Breast epithelium (tissue), 4 donors: ENCODE measurements at regions of chr18 and their contacts with region 1.

Region 1: DNA sequence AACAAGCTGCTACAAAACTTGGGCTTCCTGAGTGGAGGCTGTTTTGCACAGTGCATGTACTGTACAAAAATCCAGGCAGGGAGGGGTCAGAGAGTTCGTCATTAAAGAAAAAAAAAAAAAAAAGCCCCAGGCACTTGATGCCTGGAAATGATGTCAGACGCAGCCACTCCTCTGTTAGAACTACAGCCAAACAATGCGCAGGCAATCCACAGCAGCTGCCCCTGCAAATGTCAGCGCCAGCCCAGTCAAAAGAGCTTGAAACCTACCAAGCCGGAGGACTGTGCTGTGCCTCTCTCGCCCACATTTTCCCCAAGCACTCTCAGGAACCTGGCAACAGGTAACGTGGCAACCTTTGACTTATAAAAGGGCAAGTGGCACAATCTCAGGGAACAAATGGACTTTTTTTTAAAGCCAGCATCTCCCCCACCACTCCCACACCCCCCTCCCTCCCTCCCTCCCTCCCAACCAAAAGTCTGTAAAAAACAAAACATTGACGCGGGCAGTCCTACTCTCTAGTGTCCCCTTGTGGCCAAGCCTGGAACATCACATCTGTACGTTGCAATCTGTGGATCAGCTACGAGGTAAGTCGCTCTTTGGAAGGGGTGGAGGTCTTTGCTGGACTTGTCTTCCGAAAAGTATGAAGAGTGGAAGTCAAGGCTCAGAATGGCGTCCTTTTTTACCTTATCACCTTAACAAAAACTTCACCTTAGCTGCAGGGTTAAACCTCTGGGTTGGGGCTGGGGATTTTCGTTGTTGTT is 144.1 kb downstream of the TGIF1 start:
- DNase-seq: peak; percentile 89 to 91
- H3K4me3 ChIP-seq: peak overlapping the region; percentile 47 to 68 (median 50)
- H3K27ac ChIP-seq: peak overlapping the region; percentile 98
- H3K4me1 ChIP-seq: peaks cover 5 to 35% of the 10 kb centered on the region in 2 donors
- H3K27me3 ChIP-seq: no peaks in the 10 kb centered on the region
- CTCF ChIP-seq: peak; percentile 89 to 95 (median 94)
- POLR2A ChIP-seq: no peak

Region 2: DNA sequence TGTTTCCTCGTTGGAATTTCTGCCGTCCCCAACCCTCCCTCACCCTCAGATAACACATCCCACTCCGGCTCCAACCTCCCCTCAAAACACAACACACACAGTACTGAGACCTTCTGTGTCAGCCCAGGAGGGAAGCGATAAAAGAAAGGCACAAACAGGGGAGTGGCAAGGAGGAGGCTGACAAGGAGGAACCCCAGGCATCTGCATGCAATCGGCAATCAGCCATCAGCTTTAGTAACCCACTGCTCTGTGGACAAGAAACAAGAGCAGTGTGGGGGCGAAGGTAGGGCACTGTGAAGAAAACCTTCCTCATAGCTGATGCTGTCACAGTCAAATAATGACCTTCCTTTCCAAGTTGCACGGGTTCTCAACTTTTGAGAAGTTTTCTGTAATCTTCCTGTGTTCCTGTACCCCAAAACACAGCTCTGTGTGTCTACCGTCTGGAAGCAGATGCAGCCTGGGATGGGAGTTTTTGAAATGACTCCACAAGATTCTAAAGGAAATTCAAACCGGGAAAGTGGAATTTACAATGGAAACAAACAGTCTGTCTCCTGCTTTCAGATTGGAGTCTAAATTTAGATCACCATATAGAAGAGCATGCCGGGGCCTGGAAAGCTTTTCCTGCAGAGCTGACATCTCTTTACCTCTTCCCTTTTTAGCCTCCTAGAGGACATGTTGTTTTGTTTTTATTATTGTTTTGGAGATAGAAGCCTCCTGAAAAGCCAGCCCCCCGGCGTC is 564.7 kb before region 1 on chr18:
- intact Hi-C with region 1: no loop called
- DNase-seq: no peak
- H3K4me3 ChIP-seq: no peak overlapping the region
- H3K27ac ChIP-seq: peak overlapping the region; percentile 25 to 40
- H3K4me1 ChIP-seq: no peaks in the 10 kb centered on the region
- H3K27me3 ChIP-seq: no peaks in the 10 kb centered on the region
- CTCF ChIP-seq: no peak
- POLR2A ChIP-seq: no peak

Region 3: GRCh38 chr18:3261371-3262246 is 332.5 kb before region 1 on chr18 and contains the start of gene MYL12B:
- intact Hi-C with region 1: loop called (anchors 10 kb)
- DNase-seq: peak; percentile 78 to 84
- H3K4me3 ChIP-seq: peak within 1 kb of the TSS; percentile 85 to 98 (median 96)
- H3K27ac ChIP-seq: peak within 1 kb of the TSS; percentile 97 to 98
- H3K4me1 ChIP-seq: peaks cover 0 to 8% of the 10 kb centered on the region in 2 donors
- H3K27me3 ChIP-seq: no peaks in the 10 kb centered on the region
- CTCF ChIP-seq: peak in 2 of 3 donors; percentile 20 to 28
- POLR2A ChIP-seq: peak; percentile 90
- total RNA-seq, gene MYL12B: 305 to 371 (median 335) TPM

Region 4: DNA sequence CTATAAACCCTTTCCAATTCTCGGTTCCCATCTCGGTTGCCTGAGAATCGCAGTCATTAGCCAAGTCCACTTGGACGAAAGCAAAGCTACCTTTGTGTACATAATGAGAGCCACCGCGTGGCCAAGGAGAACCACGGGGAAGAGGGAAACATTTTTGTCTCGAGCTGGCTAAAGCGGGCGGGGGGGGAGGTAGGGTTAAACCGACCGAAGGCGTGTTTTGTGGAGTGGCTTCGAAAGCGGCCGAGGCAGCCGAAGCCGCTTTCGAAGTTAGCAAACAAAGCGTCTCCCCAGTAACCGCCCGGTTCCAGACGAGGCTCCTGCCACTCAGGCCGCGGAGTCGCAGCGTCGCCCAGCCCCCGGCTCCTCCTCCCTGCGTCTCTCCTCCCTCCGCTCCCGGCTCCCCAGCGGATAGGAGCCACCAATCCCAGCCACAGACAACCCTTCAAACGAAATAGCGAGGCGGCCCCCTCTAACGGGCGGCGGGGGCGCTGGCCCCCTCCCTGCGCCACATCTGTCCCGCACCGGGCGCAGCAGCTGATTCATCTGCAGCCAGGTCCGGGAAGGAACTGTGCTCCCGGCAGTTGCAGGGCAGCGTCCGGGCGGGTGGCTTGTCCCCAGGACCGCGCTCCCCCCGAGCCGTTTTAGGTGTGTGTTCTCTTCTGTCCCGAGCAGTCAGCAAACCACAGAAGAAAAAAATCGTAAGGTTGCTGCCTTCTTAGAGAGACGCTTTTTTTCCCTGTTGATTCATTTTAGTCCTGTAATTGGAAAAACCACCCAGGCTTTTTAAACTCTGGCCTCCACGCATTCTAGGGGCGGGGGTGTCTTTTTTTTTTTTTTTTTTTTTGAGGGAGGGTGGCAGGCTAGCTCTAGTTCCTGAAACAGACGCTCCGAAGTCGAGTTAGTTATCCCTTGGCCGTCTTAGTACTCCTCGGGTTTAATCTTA is 145.9 kb before region 1 on chr18:
- intact Hi-C with region 1: loop called (anchors 2 kb)
- DNase-seq: peak; percentile 96 to 97
- H3K4me3 ChIP-seq: peak overlapping the region; percentile 88 to 97 (median 88)
- H3K27ac ChIP-seq: peak overlapping the region; percentile 99 to 100
- H3K4me1 ChIP-seq: no peaks in the 10 kb centered on the region
- H3K27me3 ChIP-seq: no peaks in the 10 kb centered on the region
- CTCF ChIP-seq: peak in 2 of 3 donors; percentile 7 to 15
- POLR2A ChIP-seq: peak; percentile 84

Region 5: DNA sequence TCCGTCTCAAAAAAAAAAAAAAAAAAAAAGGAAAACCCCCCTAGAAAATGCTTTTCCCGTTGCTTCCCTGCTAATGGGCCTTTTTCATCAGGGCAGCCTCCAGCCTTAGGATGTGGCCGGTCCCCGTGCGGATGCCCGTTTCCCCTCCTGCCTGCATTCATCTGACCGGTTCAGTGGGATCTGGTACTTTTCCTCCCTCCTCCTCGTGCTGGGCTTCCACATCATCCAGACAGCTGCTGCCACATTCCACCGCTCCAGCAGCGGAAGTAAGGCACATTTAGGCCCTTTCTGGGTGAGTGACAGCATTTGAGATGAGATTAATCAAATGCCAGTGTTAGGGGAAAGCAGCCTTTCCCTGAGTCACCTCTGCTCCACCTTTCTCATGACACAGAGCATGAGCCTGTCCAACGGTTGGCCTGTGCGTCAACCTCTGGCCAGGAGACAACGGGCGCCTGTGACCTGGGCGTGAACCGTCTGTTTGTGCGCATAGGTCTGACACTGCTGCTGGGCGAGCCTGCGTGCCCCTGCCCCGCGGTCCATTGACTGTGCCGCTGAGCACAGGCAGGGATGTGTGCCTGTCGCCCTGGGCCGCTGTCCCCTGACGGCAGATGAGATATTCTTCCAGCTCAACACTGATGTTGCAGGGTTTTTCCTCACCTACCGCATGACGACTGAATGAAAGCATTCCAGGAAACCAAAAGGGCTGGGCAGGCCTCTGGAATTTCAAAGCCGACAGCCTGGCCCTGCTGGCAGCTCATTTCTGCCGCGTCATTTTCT is 29.9 kb after region 1 on chr18:
- intact Hi-C with region 1: no loop called
- DNase-seq: peak; percentile 75 to 88
- H3K4me3 ChIP-seq: peak overlapping the region in 2 of 3 donors; percentile 24 to 52
- H3K27ac ChIP-seq: peak overlapping the region; percentile 93 to 96
- H3K4me1 ChIP-seq: peaks cover 0 to 16% of the 10 kb centered on the region in 2 donors
- H3K27me3 ChIP-seq: no peaks in the 10 kb centered on the region
- CTCF ChIP-seq: peak in 1 of 3 donors; percentile 7
- POLR2A ChIP-seq: no peak